H1 (cell line): ENCODE measurements at regions of chr3 and their contacts with region 1.

Region 1: GRCh38 chr3:25156626-25157025 is 271.4 kb upstream of the RARB start:
- DNase-seq: peak in 1 of 2 experiments; percentile 9
- H3K4me3 ChIP-seq: peak overlapping the region in 1 of 4 experiments; percentile 37; a peak in 2 of 8 replicates
- H3K27ac ChIP-seq: peak overlapping the region; percentile 80
- H3K4me1 ChIP-seq: peaks cover 1 to 24% (median 11%) of the 10 kb centered on the region in 4 experiments; a peak in 5 of 7 replicates
- H3K27me3 ChIP-seq: no peaks in the 10 kb centered on the region
- CTCF ChIP-seq: no peak
- EP300 ChIP-seq: no peak
- POLR2A ChIP-seq: no peak
- RAD21 ChIP-seq: no peak

Region 2: GRCh38 chr3:25143356-25144025 is 13.1 kb before region 1 on chr3:
- CTCF ChIA-PET with region 1: interaction called, 3 read pairs
- POLR2A ChIA-PET with region 1: interaction called, 15 read pairs
- DNase-seq: peak in 1 of 2 experiments; percentile 10
- H3K4me3 ChIP-seq: no peak overlapping the region
- H3K27ac ChIP-seq: no peak overlapping the region
- H3K4me1 ChIP-seq: peaks cover 0 to 4% (median 2%) of the 10 kb centered on the region in 4 experiments; a peak in 1 of 7 replicates
- H3K27me3 ChIP-seq: no peaks in the 10 kb centered on the region
- CTCF ChIP-seq: no peak
- EP300 ChIP-seq: no peak
- POLR2A ChIP-seq: no peak
- RAD21 ChIP-seq: no peak

Region 3: DNA sequence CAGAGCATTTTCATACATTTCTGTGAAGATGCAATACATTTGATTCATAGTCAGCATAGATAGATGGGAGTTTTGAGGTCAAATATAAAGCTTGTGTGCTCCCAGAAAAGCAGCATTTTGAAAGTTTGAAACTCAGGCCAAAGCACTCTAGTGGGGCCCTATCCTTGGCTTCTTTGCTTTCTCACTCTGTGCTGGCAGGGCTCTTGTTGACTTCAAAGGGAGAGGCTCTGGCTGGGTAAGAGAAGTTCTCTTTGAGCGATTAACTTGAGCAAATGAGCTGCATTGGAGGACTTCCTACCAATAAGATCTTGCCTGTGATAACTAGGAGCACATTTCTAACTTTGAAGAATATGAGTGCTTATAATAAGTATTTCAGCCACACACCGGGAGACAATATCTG is 57.4 kb after region 1 on chr3:
- CTCF ChIA-PET with region 1: no interaction called
- POLR2A ChIA-PET with region 1: no interaction called
- DNase-seq: no peak
- H3K4me3 ChIP-seq: no peak overlapping the region
- H3K27ac ChIP-seq: no peak overlapping the region
- H3K4me1 ChIP-seq: no peaks in the 10 kb centered on the region; a peak in 1 of 7 replicates
- H3K27me3 ChIP-seq: no peaks in the 10 kb centered on the region
- CTCF ChIP-seq: no peak
- EP300 ChIP-seq: no peak
- POLR2A ChIP-seq: no peak
- RAD21 ChIP-seq: no peak

Region 4: GRCh38 chr3:25335356-25335755 is 178.7 kb after region 1 on chr3:
- CTCF ChIA-PET with region 1: no interaction called
- POLR2A ChIA-PET with region 1: no interaction called
- DNase-seq: no peak
- H3K4me3 ChIP-seq: no peak overlapping the region
- H3K27ac ChIP-seq: no peak overlapping the region
- H3K4me1 ChIP-seq: no peaks in the 10 kb centered on the region
- H3K27me3 ChIP-seq: no peaks in the 10 kb centered on the region
- CTCF ChIP-seq: no peak
- EP300 ChIP-seq: no peak
- POLR2A ChIP-seq: no peak
- RAD21 ChIP-seq: no peak; a peak in 1 of 4 replicates